ENCODE measurements at regions of chr6 and their contacts with region 1.

Region 1: GRCh38 chr6:51855310-51856082 is 231.9 kb downstream of the PKHD1 start:
- DNase-seq: no peak
- ATAC-seq: peak in 1 of 4 donors; percentile 67
- H3K4me3 ChIP-seq: no peak overlapping the region
- H3K27ac ChIP-seq: no peak overlapping the region
- H3K4me1 ChIP-seq: no peaks in the 10 kb centered on the region
- H3K27me3 ChIP-seq: no peaks in the 10 kb centered on the region
- CTCF ChIP-seq: peak; percentile 66

Region 2: DNA sequence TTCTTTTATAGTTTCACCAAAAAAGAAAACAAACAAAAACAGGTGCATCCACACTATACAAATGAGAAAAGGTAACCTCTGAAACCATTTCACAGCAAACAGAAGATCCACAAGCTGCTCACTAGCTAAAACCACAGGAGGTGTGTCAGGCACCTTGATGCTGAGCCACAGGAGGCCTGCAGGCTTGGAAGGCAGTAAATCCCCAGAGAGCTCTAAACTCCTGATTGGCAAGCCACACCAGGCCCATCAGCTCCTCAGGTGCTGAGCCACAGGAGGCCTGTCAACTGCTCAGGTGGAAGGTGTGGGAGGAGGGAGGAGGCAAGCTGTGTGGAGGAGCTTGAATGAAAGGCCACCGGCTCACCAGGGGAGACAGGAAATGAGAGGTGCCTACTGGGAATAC is 41.1 kb before region 1 on chr6:
- intact Hi-C with region 1: no loop called
- DNase-seq: no peak
- ATAC-seq: no peak
- H3K4me3 ChIP-seq: no peak overlapping the region
- H3K27ac ChIP-seq: no peak overlapping the region
- H3K4me1 ChIP-seq: no peaks in the 10 kb centered on the region
- H3K27me3 ChIP-seq: no peaks in the 10 kb centered on the region
- CTCF ChIP-seq: no peak

Region 3: DNA sequence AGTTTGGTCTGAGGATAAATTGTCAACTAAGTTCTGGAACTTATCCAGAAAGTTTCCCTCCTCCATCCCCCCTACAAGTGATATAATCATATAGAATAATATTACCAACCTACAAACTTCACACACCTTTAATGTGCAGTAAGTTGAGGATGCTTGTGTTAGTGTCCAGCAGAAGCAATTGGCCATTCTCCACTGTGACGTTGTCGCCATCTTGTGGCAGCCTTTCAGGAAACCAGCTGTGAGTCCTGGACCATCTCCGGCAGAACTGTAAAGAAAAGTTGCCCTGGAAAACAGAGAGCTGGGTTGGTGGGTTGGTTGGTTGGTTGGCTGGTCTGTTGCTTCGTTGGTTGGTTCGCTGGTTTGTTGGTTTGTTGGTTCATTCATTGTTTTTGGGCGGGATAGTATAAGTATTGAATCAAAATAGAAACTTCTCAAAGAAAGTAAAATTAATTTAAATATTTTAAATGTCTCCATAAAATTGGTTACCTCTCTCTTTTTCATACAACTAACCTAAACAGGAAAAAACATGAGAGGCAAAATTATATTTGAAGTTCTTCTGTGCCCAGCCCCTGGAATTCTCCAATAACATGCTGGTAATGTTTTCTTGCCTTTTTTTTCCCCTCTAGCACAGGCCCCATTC is 104.4 kb after region 1 on chr6:
- intact Hi-C with region 1: loop called in 1 of 2 experiments (anchors 5 kb)
- DNase-seq: peak; percentile 34 to 59
- ATAC-seq: peak in 1 of 4 donors; percentile 66
- H3K4me3 ChIP-seq: no peak overlapping the region
- H3K27ac ChIP-seq: no peak overlapping the region
- H3K4me1 ChIP-seq: no peaks in the 10 kb centered on the region
- H3K27me3 ChIP-seq: no peaks in the 10 kb centered on the region
- CTCF ChIP-seq: peak; percentile 52

Measured in psoas muscle (tissue), 8 donors.